ENCODE measurements at regions of chr1 and their contacts with region 1.

Region 1: DNA sequence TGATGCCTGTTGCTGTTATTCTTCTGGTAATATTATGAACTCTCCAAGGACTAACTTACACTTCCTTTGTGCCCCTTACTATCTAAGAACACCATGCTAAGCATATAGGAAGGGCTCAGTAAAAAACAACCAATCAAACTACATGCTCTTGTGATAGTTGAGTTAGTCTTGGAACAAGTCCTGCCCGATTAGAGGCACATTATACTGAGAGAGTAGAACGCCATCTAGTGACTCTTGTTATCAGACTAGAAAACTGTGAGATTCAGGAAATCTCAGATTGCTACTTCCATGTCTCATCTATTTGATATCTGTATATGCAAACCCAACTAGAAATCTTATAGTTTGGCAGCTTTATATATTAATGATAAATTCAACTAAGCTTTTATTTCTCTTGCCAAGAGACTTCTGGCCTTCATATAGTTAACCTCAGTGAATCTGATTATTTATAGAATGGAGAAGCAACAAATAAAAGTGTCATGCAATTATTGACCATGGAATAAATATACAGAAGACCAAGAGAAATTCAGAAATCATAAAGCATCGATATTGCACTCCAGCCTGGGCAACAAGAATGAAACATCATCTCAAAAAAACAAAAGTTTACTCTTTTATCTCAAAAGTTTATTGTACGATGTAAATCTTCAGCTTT is 7.8 kb upstream of the SRRM1 start:
- DNase-seq: peak; percentile 86
- H3K4me3 ChIP-seq: no peak overlapping the region
- H3K27ac ChIP-seq: no peak overlapping the region
- H3K4me1 ChIP-seq: peaks cover 4% of the 10 kb centered on the region
- H3K27me3 ChIP-seq: no peaks in the 10 kb centered on the region
- CTCF ChIP-seq: peak; percentile 82

Region 2: GRCh38 chr1:24186993-24187805 is 448.1 kb before region 1 on chr1 and contains the start of gene IFNLR1:
- CTCF ChIA-PET with region 1: no interaction called
- POLR2A ChIA-PET with region 1: no interaction called
- intact Hi-C with region 1: no loop called
- DNase-seq: peak; percentile 61
- H3K4me3 ChIP-seq: peak within 1 kb of the TSS; percentile 62
- H3K27ac ChIP-seq: peak within 1 kb of the TSS; percentile 56
- H3K4me1 ChIP-seq: no peaks in the 10 kb centered on the region
- H3K27me3 ChIP-seq: no peaks in the 10 kb centered on the region
- CTCF ChIP-seq: no peak
- total RNA-seq, gene IFNLR1: 1.4 and 2.0 TPM in 2 replicates

Region 3: DNA sequence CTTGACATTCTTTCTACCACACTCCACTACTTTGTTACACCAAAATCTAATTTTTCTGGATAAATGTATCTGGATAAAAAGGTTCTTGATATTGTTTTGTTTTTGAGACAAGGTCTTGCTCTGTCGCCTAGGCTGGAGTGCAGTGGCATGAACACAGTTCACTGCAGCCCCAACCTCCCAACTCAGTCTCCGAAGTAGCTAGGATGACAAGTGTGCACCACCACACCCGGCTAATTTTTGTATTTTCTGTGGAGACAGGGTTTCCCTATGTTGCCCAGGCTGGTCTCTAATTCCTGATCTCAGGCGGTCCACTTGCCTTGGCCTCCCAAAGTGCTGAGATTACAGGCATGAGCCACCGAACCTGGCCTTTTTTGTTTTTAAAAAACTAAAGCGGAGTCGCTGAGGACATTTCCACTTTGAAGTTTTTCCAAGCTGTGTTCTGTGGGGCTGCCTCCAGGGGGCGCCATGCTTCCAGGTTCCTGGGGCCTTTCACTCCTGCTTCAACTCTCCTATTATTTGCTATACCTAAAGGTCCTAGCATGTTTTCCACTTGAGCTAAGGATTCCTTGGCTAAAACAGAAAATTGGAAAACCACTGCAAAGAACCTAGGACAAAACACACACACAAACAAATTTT is 93.5 kb before region 1 on chr1:
- CTCF ChIA-PET with region 1: no interaction called
- POLR2A ChIA-PET with region 1: no interaction called
- intact Hi-C with region 1: loop called (anchors 10 kb)
- DNase-seq: no peak
- H3K4me3 ChIP-seq: no peak overlapping the region
- H3K27ac ChIP-seq: no peak overlapping the region
- H3K4me1 ChIP-seq: no peaks in the 10 kb centered on the region
- H3K27me3 ChIP-seq: no peaks in the 10 kb centered on the region
- CTCF ChIP-seq: peak; percentile 76

Measured in A673 (cell line).